CD4-positive, alpha-beta T cell (primary cell): ENCODE measurements at regions of chr15 and their contacts with region 1.

Region 1: DNA sequence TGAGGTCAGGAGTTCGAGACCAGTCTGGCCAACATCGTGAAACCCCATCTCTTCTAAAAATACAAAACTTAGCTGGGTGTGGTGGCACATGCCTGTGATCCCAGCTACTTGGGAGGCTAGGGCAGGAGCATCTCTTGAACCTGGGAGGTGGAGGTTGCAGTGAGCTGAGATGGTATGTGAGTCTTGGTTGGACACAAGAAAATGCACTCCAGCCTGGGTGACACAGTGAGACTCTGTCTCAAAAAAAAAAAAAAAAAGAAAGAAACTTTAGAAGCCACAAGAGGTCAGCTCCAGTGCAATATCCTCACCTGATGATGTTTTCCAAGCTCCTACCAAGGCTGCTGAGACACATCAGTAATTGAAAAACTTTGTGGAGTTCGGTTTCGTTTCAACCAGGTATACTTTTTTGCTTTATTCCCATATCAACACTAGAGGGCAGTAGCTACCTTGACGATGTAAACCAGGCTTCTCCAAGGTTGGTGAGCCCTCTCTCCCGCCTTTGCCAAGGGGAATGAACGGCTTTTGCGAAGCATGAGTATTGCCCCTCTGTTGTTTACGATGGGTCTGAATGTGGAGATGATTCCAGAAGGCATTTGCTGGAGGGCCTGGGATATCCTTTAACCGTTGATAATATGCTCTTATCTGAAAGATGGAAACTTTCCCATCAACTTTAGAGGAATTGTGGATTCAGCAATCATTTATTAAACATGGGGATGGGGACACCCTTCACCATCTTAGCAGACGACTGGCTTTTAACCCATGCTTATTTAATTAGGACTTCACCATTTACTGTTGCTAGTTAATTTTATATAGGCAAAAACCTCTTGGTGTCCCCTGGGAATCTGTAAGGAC is 202.8 kb downstream of the SV2B start:
- DNase-seq: peak in 5 of 14 experiments; percentile 30 to 76 (median 75)
- ATAC-seq: no peak
- H3K4me3 ChIP-seq: no peak overlapping the region
- H3K4me3 Mint-ChIP-seq: no peak overlapping the region
- H3K27ac ChIP-seq: no peak overlapping the region
- H3K27ac Mint-ChIP-seq: no peak overlapping the region
- H3K4me1 ChIP-seq: peaks cover 30% of the 10 kb centered on the region
- H3K4me1 Mint-ChIP-seq: peaks cover 31% of the 10 kb centered on the region
- H3K27me3 ChIP-seq: no peaks in the 10 kb centered on the region
- H3K27me3 Mint-ChIP-seq: peaks cover 26% of the 10 kb centered on the region
- CTCF ChIP-seq: peak; percentile 86

Region 2: GRCh38 chr15:91706322-91707032 is 403.7 kb after region 1 on chr15:
- CTCF ChIA-PET with region 1: interaction called, 5 read pairs
- POLR2A ChIA-PET with region 1: no interaction called
- intact Hi-C with region 1: loop called in 1 of 2 experiments (anchors 5 kb)
- DNase-seq: peak; percentile 61 to 92 (median 77)
- ATAC-seq: peak; percentile 94
- H3K4me3 ChIP-seq: no peak overlapping the region
- H3K4me3 Mint-ChIP-seq: peak overlapping the region; percentile 50
- H3K27ac ChIP-seq: peak overlapping the region in 1 of 2 donors; percentile 10
- H3K27ac Mint-ChIP-seq: peak overlapping the region; percentile 7
- H3K4me1 ChIP-seq: peaks cover 14% of the 10 kb centered on the region
- H3K4me1 Mint-ChIP-seq: peaks cover 18% of the 10 kb centered on the region
- H3K27me3 ChIP-seq: no peaks in the 10 kb centered on the region
- H3K27me3 Mint-ChIP-seq: no peaks in the 10 kb centered on the region
- CTCF ChIP-seq: peak; percentile 82

Region 3: GRCh38 chr15:91852741-91853510 is 550.1 kb after region 1 on chr15:
- CTCF ChIA-PET with region 1: interaction called, 3 read pairs
- POLR2A ChIA-PET with region 1: no interaction called
- intact Hi-C with region 1: loop called in 1 of 2 experiments (anchors 10 kb)
- DNase-seq: peak; percentile 45 to 90 (median 72)
- ATAC-seq: peak; percentile 52
- H3K4me3 ChIP-seq: peak overlapping the region; percentile 73
- H3K4me3 Mint-ChIP-seq: peak overlapping the region; percentile 94
- H3K27ac ChIP-seq: peak overlapping the region; percentile 73
- H3K27ac Mint-ChIP-seq: peak overlapping the region; percentile 92
- H3K4me1 ChIP-seq: peaks cover 68% of the 10 kb centered on the region
- H3K4me1 Mint-ChIP-seq: peaks cover 72% of the 10 kb centered on the region
- H3K27me3 ChIP-seq: no peaks in the 10 kb centered on the region
- H3K27me3 Mint-ChIP-seq: no peaks in the 10 kb centered on the region
- CTCF ChIP-seq: peak; percentile 53

Region 4: DNA sequence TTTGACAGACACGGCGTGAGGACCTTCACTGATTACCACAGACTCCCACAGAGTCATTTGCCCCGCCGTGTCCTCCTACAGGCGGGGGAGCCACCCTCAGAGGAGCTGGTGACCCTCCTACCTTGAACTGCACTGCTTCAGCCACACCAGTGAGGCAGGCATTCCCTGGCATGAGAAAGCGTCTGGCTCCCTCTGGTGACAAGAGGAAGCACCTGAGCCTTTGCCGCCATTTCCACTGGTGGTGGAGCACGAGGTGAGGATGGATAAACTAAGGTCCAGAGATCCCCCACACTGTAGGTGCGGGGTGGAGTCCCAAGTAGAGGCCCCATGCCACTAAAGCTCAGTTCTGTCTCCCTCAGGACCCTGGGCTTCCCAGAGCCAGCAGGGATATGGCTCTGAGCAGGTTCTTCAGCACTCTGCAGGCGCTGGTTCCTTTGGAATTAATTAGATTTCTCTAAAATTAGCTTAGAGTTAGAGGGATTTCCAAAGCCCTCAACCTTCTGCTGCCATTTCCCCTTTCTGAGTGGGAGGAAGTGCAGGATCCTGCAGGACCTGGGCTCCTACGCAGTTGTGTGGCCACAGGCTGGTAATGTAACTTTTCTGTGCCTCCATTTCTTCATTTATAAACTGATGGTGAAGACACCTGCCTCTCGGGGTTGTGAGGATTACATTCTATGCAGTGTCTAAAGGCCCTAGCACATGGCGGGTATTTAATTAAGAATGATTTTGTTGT is 774.7 kb after region 1 on chr15:
- CTCF ChIA-PET with region 1: no interaction called
- POLR2A ChIA-PET with region 1: no interaction called
- intact Hi-C with region 1: loop called (anchors 1 to 2 kb)
- DNase-seq: peak; percentile 36 to 75 (median 46)
- ATAC-seq: peak; percentile 73
- H3K4me3 ChIP-seq: no peak overlapping the region
- H3K4me3 Mint-ChIP-seq: no peak overlapping the region
- H3K27ac ChIP-seq: no peak overlapping the region
- H3K27ac Mint-ChIP-seq: no peak overlapping the region
- H3K4me1 ChIP-seq: peaks cover 34% of the 10 kb centered on the region
- H3K4me1 Mint-ChIP-seq: peaks cover 33% of the 10 kb centered on the region
- H3K27me3 ChIP-seq: no peaks in the 10 kb centered on the region
- H3K27me3 Mint-ChIP-seq: no peaks in the 10 kb centered on the region
- CTCF ChIP-seq: peak; percentile 64

Region 5: GRCh38 chr15:93072411-93073394 is 1769.9 kb after region 1 on chr15:
- CTCF ChIA-PET with region 1: no interaction called
- POLR2A ChIA-PET with region 1: no interaction called
- intact Hi-C with region 1: no loop called
- DNase-seq: no peak
- ATAC-seq: no peak
- H3K4me3 ChIP-seq: no peak overlapping the region
- H3K4me3 Mint-ChIP-seq: no peak overlapping the region
- H3K27ac ChIP-seq: no peak overlapping the region
- H3K27ac Mint-ChIP-seq: no peak overlapping the region
- H3K4me1 ChIP-seq: peaks cover 15% of the 10 kb centered on the region
- H3K4me1 Mint-ChIP-seq: peaks cover 5% of the 10 kb centered on the region
- H3K27me3 ChIP-seq: peaks cover 43 to 53% of the 10 kb centered on the region in 2 experiments
- H3K27me3 Mint-ChIP-seq: peaks cover 80% of the 10 kb centered on the region
- CTCF ChIP-seq: no peak